H1 (cell line): ENCODE measurements at regions of chr12 and their contacts with region 1.

Region 1: GRCh38 chr12:49866859-49867579 is 24.1 kb upstream of the BCDIN3D start:
- DNase-seq: peak; percentile 54 to 96
- H3K4me3 ChIP-seq: no peak overlapping the region
- H3K27ac ChIP-seq: no peak overlapping the region
- H3K4me1 ChIP-seq: peaks cover 0 to 3% (median 1%) of the 10 kb centered on the region in 4 experiments; a peak in 3 of 7 replicates
- H3K27me3 ChIP-seq: peaks cover 0 to 2% (median 0%) of the 10 kb centered on the region in 4 experiments; a peak in 1 of 7 replicates
- CTCF ChIP-seq: peak; percentile 90 to 98 (median 93)
- EP300 ChIP-seq: no peak
- POLR2A ChIP-seq: no peak
- RAD21 ChIP-seq: peak; percentile 94 to 95

Region 2: GRCh38 chr12:49626169-49626835 is 240.7 kb before region 1 on chr12:
- CTCF ChIA-PET with region 1: no interaction called
- POLR2A ChIA-PET with region 1: no interaction called
- DNase-seq: no peak
- H3K4me3 ChIP-seq: no peak overlapping the region
- H3K27ac ChIP-seq: no peak overlapping the region
- H3K4me1 ChIP-seq: peaks cover 0 to 7% (median 3%) of the 10 kb centered on the region in 4 experiments; a peak in 6 of 7 replicates
- H3K27me3 ChIP-seq: no peaks in the 10 kb centered on the region
- CTCF ChIP-seq: no peak
- EP300 ChIP-seq: no peak
- POLR2A ChIP-seq: no peak
- RAD21 ChIP-seq: no peak

Region 3: DNA sequence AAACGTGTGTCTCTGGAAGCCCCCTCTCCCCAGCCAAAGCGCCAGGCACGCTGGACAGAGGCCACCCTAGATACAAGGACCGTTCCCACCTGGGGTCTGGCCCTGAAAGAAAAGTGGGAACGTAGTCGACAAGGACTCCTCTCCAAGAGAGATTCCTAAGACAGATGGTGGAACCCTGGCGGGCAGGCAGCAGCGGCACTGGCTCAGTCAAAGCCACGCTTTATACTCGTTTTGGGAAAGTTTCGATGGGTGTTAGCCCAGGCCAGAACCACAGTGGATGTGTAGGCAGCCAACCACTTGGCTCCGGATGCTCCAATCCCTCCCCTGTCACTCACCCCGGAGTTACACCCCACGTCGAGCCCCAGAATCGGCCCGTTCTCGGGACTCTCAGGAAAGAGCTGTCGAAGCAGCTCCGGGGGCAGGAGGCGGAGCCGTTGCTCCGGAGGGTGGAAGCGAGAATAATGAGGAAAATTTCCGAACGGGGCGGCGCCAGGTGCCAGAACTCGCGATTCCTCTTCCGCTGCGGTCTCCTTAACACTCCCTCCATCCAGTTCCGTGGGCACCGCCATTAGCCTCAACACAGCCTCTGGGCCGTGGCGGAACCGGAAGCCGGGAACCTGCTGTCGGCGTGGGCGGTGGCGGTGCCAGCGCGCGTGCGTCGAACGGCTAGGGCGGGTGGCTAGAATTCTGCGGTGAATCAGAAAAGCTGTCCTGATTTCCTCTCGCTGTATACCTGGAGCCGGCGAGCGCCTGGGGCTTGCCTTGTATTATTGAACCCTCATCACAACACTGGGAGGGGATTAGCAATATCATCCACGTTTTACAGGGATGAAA is 24.3 kb before region 1 on chr12 and contains the start of gene BCDIN3D:
- CTCF ChIA-PET with region 1: interaction called, 14 read pairs
- POLR2A ChIA-PET with region 1: no interaction called
- DNase-seq: peak in 1 of 2 experiments; percentile 83
- H3K4me3 ChIP-seq: peak within 1 kb of the TSS; percentile 63 to 90 (median 84)
- H3K27ac ChIP-seq: peak within 1 kb of the TSS; percentile 62
- H3K4me1 ChIP-seq: peaks cover 2 to 5% (median 4%) of the 10 kb centered on the region in 4 experiments; a peak in 4 of 7 replicates
- H3K27me3 ChIP-seq: no peaks in the 10 kb centered on the region
- CTCF ChIP-seq: no peak
- EP300 ChIP-seq: no peak
- POLR2A ChIP-seq: peak in 1 of 2 experiments; percentile 80; a peak in 2 of 3 replicates
- RAD21 ChIP-seq: no peak
- total RNA-seq, gene BCDIN3D: 2.4 and 2.5 TPM in 2 replicates

Region 4: DNA sequence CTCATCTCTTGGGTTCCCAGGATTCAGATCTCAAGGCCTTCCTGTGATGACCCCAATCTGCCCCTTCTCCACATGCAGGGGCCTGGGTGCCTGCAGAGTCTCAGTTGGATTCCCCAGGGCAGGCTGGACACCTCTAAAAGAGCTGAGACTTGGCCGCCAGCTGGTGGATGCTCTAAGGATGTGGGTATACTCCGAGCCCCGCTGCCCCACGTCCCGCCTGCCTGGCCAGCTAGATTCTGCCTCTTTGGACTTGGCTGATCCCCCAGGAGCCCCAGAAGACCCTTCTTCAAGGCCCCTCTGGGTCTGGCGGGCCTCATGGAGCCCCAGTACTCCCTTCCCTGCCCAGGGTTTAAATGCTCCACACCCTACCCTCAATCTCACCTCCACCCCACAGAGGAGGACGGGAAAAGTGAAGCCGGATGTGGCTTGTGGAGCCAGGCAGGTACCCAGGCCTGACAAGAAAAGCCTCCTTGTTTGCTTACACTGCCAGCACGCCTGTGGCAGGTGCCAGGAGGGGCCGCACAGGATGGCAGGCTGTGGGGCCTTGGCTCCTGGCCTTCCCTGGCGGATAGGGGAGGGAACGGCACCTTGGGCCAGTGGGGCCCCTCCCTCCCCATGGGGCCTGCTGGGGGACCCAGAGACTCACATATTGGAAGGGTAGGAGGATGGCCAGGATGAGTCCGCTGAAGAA is 21.6 kb after region 1 on chr12:
- CTCF ChIA-PET with region 1: interaction called, 107 read pairs
- POLR2A ChIA-PET with region 1: interaction called, 4 read pairs
- DNase-seq: no peak
- H3K4me3 ChIP-seq: no peak overlapping the region
- H3K27ac ChIP-seq: no peak overlapping the region
- H3K4me1 ChIP-seq: peaks cover 0 to 16% (median 6%) of the 10 kb centered on the region in 4 experiments; a peak in 6 of 7 replicates
- H3K27me3 ChIP-seq: no peaks in the 10 kb centered on the region
- CTCF ChIP-seq: no peak
- EP300 ChIP-seq: no peak
- POLR2A ChIP-seq: no peak
- RAD21 ChIP-seq: no peak

Region 5: GRCh38 chr12:49912345-49913255 is 45.6 kb after region 1 on chr12:
- CTCF ChIA-PET with region 1: interaction called, 20 read pairs
- POLR2A ChIA-PET with region 1: no interaction called
- DNase-seq: no peak
- H3K4me3 ChIP-seq: no peak overlapping the region
- H3K27ac ChIP-seq: no peak overlapping the region
- H3K4me1 ChIP-seq: peaks cover 0 to 25% (median 12%) of the 10 kb centered on the region in 4 experiments; a peak in 6 of 7 replicates
- H3K27me3 ChIP-seq: peaks cover 0 to 3% (median 0%) of the 10 kb centered on the region in 4 experiments; a peak in 2 of 7 replicates
- CTCF ChIP-seq: no peak
- EP300 ChIP-seq: no peak
- POLR2A ChIP-seq: no peak
- RAD21 ChIP-seq: no peak

Region 6: DNA sequence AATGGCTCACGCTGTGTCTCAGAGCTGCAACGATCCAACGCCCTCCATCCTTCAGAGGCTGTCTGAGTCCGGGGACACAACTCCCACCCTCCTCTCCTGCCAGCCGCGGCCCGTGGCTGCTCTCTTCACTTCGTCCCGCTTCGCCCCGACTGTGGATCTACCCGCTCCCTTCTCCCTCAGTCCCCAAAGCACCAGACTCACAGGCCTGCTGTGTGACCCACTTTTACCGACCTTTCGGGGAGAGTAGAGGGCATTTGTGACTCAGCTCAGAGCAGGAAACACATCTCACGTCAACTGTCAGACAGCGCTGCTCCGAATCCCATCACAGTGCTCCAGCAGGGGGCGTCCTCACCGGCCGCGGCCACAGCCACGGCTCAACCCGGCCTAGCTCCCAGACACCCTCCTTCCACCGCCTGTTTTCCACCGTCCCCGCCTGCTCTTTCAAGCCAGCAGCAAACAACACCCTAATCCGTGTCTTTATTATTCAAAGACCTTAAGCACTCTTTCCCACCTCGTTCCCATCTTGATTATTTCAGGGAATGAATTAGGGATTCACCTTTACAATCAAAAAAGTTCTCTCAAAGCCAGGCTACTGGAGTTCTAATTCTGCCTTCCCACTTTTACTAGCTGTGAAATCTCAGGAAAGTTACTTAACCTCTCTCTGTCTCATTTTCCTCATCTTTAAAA is 78.5 kb after region 1 on chr12:
- CTCF ChIA-PET with region 1: interaction called, 56 read pairs
- POLR2A ChIA-PET with region 1: no interaction called
- DNase-seq: peak; percentile 77 to 97
- H3K4me3 ChIP-seq: peak overlapping the region in 2 of 4 experiments; percentile 16 to 44; a peak in 4 of 8 replicates
- H3K27ac ChIP-seq: no peak overlapping the region
- H3K4me1 ChIP-seq: peaks cover 3 to 17% (median 4%) of the 10 kb centered on the region in 4 experiments; a peak in 6 of 7 replicates
- H3K27me3 ChIP-seq: peaks cover 0 to 3% (median 0%) of the 10 kb centered on the region in 4 experiments; a peak in 1 of 7 replicates
- CTCF ChIP-seq: peak; percentile 87 to 95 (median 89)
- EP300 ChIP-seq: no peak
- POLR2A ChIP-seq: no peak
- RAD21 ChIP-seq: peak; percentile 54 to 64

Region 7: GRCh38 chr12:49967042-49967776 is 100.2 kb after region 1 on chr12:
- CTCF ChIA-PET with region 1: interaction called, 137 read pairs
- POLR2A ChIA-PET with region 1: interaction called, 3 read pairs
- DNase-seq: peak; percentile 63 to 99
- H3K4me3 ChIP-seq: peak overlapping the region in 3 of 4 experiments; percentile 31 to 53 (median 45); a peak in 6 of 8 replicates
- H3K27ac ChIP-seq: no peak overlapping the region
- H3K4me1 ChIP-seq: peaks cover 0 to 9% (median 3%) of the 10 kb centered on the region in 4 experiments; a peak in 5 of 7 replicates
- H3K27me3 ChIP-seq: peaks cover 0 to 40% (median 21%) of the 10 kb centered on the region in 4 experiments; a peak in 6 of 7 replicates
- CTCF ChIP-seq: peak in 2 of 3 experiments; percentile 96; a peak in 3 of 4 replicates
- EP300 ChIP-seq: no peak
- POLR2A ChIP-seq: no peak
- RAD21 ChIP-seq: peak; percentile 90 to 94